ENCODE measurements at regions of chr6 and their contacts with region 1.

Region 1: GRCh38 chr6:170554013-170554795 is at the start of gene TBP:
- DNase-seq: peak; percentile 88 to 96
- H3K4me3 ChIP-seq: peak within 1 kb of the TSS; percentile 93
- H3K27ac ChIP-seq: peak within 1 kb of the TSS; percentile 85
- H3K4me1 ChIP-seq: peaks cover 37% of the 10 kb centered on the region
- H3K27me3 ChIP-seq: no peaks in the 10 kb centered on the region
- CTCF ChIP-seq: no peak
- total RNA-seq, gene TBP: 10.6 and 11.2 TPM in 2 replicates

Region 2: GRCh38 chr6:170316071-170316470 is 238.1 kb before region 1 on chr6:
- CTCF ChIA-PET with region 1: no interaction called
- POLR2A ChIA-PET with region 1: no interaction called
- intact Hi-C with region 1: no loop called
- DNase-seq: no peak
- H3K4me3 ChIP-seq: no peak overlapping the region
- H3K27ac ChIP-seq: no peak overlapping the region
- H3K4me1 ChIP-seq: no peaks in the 10 kb centered on the region
- H3K27me3 ChIP-seq: no peaks in the 10 kb centered on the region
- CTCF ChIP-seq: no peak

Region 3: DNA sequence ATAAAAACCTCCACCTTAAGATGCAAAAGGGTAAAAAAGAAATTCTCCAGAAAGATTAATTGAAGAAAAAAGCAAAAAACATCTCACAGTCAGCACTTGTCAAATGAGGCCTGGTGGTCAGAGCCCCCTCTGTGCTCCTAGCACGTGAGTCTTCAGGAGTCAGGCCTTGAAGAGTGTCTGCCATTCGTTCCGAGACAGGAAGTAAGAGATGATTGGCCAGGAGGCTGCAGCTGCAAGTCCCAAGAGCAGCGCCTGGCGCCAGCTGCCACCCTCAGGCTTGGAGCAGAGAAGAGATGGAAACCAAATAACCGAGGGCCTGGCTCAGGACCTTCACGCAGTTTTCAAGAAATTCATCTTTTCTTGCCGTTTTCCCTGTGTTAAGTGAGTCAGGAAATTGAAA is 182.6 kb before region 1 on chr6:
- CTCF ChIA-PET with region 1: no interaction called
- POLR2A ChIA-PET with region 1: no interaction called
- intact Hi-C with region 1: no loop called
- DNase-seq: no peak
- H3K4me3 ChIP-seq: no peak overlapping the region
- H3K27ac ChIP-seq: no peak overlapping the region
- H3K4me1 ChIP-seq: peaks cover 8% of the 10 kb centered on the region
- H3K27me3 ChIP-seq: no peaks in the 10 kb centered on the region
- CTCF ChIP-seq: no peak

Region 4: DNA sequence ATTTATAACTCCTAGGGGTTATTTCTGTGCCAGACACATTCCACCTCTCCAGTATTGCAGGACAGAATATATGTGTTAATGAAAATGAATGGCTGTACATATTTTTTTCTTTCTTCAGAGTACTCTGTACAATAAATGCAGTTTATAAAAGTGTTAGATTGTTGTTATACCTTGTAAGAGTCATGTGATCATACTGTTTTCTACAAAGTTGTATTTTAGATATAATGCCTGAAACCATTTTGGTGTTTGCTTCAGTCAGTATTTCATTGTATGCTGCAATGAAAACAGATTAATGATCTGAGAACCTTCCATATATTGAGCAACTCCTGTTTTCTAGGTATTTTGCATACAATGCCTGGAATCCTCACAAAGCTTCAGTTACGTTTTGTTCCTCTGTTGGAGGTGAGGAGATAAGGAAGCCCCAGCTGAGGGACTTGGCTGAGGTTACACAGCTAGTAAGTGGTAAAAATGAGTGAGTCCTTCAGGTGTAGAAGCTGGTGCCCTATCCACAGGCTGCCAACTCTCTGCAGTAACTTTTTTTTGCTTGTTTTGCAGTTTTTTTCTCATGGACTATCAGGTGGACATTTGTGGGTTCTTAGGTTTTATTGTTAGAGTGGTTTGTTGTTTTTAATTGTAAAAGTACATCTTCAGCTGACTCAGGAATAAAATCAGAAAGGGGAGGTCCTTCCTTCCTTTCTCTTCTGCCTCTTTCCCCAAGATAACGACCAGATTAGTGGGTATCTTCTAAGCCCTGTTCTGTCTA is 18.7 kb after region 1 on chr6:
- CTCF ChIA-PET with region 1: no interaction called
- POLR2A ChIA-PET with region 1: interaction called, 11 read pairs
- intact Hi-C with region 1: no loop called
- DNase-seq: no peak
- H3K4me3 ChIP-seq: no peak overlapping the region
- H3K27ac ChIP-seq: no peak overlapping the region
- H3K4me1 ChIP-seq: no peaks in the 10 kb centered on the region
- H3K27me3 ChIP-seq: no peaks in the 10 kb centered on the region
- CTCF ChIP-seq: no peak

Region 5: DNA sequence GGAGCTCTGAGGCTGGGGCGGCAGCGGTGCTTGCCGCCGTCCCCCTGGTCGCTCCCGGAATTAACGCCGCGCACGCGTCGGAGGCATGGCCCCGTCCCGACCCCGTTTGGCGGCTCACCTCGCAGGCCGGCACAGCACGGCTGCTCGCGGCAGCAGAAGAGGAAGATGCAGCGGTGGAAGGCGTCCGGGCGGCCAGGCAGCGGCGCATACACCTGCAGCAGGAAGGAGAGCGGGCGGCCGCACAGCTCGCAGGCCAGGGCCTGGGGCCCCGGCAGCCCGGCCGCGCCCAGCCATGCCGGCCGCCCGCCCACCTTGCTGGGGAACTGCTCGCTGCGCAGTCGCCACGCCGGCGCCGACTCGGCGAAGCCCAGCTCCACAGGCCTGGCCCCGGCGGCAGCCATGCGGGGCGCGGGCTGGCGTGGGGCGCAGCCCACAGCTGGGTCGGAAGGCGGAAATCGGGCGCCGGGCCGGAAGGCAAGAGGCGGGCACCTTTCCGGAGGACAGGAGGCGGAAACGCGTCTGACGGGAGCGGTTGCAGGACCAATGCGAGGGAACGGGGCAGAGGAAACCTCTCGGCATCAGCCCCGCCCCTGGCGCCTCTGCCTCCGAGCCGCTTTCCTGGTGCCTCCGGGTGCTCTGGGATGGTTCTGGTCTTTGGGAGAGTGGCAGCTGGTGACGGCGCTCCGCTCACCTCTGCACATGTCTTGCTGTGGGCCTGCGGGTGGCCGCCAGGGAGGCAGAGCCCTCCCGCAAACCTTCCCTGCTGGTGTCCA is 30.2 kb after region 1 on chr6 and contains the start of gene PDCD2:
- CTCF ChIA-PET with region 1: no interaction called
- POLR2A ChIA-PET with region 1: no interaction called
- intact Hi-C with region 1: loop called (anchors 2 kb)
- DNase-seq: peak; percentile 81
- H3K4me3 ChIP-seq: peak within 1 kb of the TSS; percentile 85
- H3K27ac ChIP-seq: peak within 1 kb of the TSS; percentile 42; the same call in 1 of the 2 replicates
- H3K4me1 ChIP-seq: peaks cover 18% of the 10 kb centered on the region
- H3K27me3 ChIP-seq: no peaks in the 10 kb centered on the region
- CTCF ChIP-seq: no peak
- total RNA-seq, gene PDCD2: 43.1 and 51.7 TPM in 2 replicates

Region 6: GRCh38 chr6:170605574-170606259 is 51.5 kb after region 1 on chr6:
- CTCF ChIA-PET with region 1: no interaction called
- POLR2A ChIA-PET with region 1: no interaction called
- intact Hi-C with region 1: no loop called
- DNase-seq: no peak
- H3K4me3 ChIP-seq: no peak overlapping the region
- H3K27ac ChIP-seq: no peak overlapping the region
- H3K4me1 ChIP-seq: no peaks in the 10 kb centered on the region
- H3K27me3 ChIP-seq: peaks cover 47% of the 10 kb centered on the region
- CTCF ChIP-seq: no peak

Measured in PC-9 (cell line).